ENCODE measurements at regions of chr10 and their contacts with region 1.

Region 1: GRCh38 chr10:61140765-61141392 is 196.9 kb upstream of the RHOBTB1 start:
- DNase-seq: peak in 3 of 14 experiments; percentile 23 to 33 (median 32)
- ATAC-seq: no peak
- H3K4me3 ChIP-seq: no peak overlapping the region
- H3K4me3 Mint-ChIP-seq: no peak overlapping the region
- H3K27ac ChIP-seq: no peak overlapping the region
- H3K27ac Mint-ChIP-seq: no peak overlapping the region
- H3K4me1 ChIP-seq: no peaks in the 10 kb centered on the region
- H3K4me1 Mint-ChIP-seq: no peaks in the 10 kb centered on the region
- H3K27me3 ChIP-seq: no peaks in the 10 kb centered on the region
- H3K27me3 Mint-ChIP-seq: no peaks in the 10 kb centered on the region
- CTCF ChIP-seq: peak; percentile 60

Region 2: DNA sequence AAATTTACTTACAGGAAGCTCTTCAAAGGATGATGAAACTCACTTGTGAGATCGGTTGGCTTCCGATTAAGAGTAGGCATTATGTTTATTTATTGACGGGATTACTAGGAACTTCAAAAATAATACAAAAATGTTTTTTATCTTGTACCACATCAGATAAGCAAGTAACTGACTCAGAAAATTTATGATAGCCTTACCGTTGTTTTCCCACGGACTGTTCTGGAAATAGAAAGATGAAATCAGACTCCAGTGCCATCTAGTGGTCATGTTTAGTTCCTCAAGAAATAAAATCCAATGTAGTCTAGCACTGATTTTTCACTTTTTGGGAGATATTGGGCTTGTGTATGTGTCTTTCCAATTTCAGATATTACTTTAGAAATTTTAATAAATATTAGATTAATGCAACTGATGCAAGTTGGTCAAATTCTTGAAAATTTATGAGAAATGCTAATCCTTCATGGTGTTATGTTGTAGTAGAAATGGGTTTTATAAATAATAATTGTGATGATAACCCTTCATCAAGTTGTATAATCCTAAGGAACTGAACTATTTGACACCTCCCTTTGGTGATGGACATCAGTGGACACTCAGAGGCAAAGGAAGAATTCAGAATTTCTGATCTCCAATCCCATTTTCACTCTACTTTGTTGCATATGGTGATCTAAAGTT is 143.5 kb after region 1 on chr10:
- CTCF ChIA-PET with region 1: no interaction called
- POLR2A ChIA-PET with region 1: no interaction called
- intact Hi-C with region 1: loop called in 1 of 2 experiments (anchors 5 kb)
- DNase-seq: peak in 3 of 14 experiments; percentile 53 to 65 (median 59)
- ATAC-seq: peak; percentile 31
- H3K4me3 ChIP-seq: peak overlapping the region; percentile 7
- H3K4me3 Mint-ChIP-seq: peak overlapping the region; percentile 74
- H3K27ac ChIP-seq: no peak overlapping the region
- H3K27ac Mint-ChIP-seq: peak overlapping the region; percentile 16
- H3K4me1 ChIP-seq: no peaks in the 10 kb centered on the region
- H3K4me1 Mint-ChIP-seq: peaks cover 26% of the 10 kb centered on the region
- H3K27me3 ChIP-seq: no peaks in the 10 kb centered on the region
- H3K27me3 Mint-ChIP-seq: no peaks in the 10 kb centered on the region
- CTCF ChIP-seq: peak; percentile 93

Region 3: GRCh38 chr10:61701055-61701705 is 560.3 kb after region 1 on chr10:
- CTCF ChIA-PET with region 1: no interaction called
- POLR2A ChIA-PET with region 1: no interaction called
- intact Hi-C with region 1: no loop called
- DNase-seq: no peak
- ATAC-seq: no peak
- H3K4me3 ChIP-seq: no peak overlapping the region
- H3K4me3 Mint-ChIP-seq: no peak overlapping the region
- H3K27ac ChIP-seq: no peak overlapping the region
- H3K27ac Mint-ChIP-seq: no peak overlapping the region
- H3K4me1 ChIP-seq: no peaks in the 10 kb centered on the region
- H3K4me1 Mint-ChIP-seq: no peaks in the 10 kb centered on the region
- H3K27me3 ChIP-seq: no peaks in the 10 kb centered on the region
- H3K27me3 Mint-ChIP-seq: no peaks in the 10 kb centered on the region
- CTCF ChIP-seq: no peak

Region 4: DNA sequence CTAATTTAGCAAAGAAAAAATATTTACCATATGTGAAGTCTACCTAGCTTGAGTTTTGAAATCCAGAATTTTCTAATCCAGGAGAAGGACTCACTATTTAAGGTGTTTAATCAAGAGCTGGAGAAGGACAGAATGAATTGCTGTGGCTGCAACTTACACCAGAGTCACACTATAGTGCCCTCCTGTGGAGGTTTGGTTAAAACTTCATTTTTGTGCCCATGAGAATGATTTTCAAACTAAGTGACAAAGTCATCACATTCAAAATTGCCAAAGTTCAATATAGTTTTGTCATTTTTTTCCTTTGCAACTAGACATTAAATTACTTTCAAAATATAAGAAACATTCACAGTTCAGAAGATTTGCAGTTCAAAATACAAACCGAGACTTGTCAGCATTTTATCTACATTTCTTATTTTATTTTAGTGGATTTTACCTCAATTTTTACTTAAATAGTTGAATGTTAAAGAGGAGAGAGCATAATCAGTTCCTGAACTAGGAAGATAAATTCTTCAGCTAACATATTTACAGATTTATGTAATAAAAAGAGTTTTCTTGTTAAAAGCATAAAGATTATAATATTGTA is 592.6 kb after region 1 on chr10:
- CTCF ChIA-PET with region 1: no interaction called
- POLR2A ChIA-PET with region 1: no interaction called
- intact Hi-C with region 1: loop called (anchors 5 kb)
- DNase-seq: peak in 3 of 14 experiments; percentile 22 to 30 (median 27)
- ATAC-seq: no peak
- H3K4me3 ChIP-seq: no peak overlapping the region
- H3K4me3 Mint-ChIP-seq: no peak overlapping the region
- H3K27ac ChIP-seq: no peak overlapping the region
- H3K27ac Mint-ChIP-seq: no peak overlapping the region
- H3K4me1 ChIP-seq: no peaks in the 10 kb centered on the region
- H3K4me1 Mint-ChIP-seq: no peaks in the 10 kb centered on the region
- H3K27me3 ChIP-seq: peaks cover 0 to 14% of the 10 kb centered on the region in 2 experiments
- H3K27me3 Mint-ChIP-seq: peaks cover 47% of the 10 kb centered on the region
- CTCF ChIP-seq: peak; percentile 65

Region 5: GRCh38 chr10:61835069-61835945 is 694.4 kb after region 1 on chr10:
- CTCF ChIA-PET with region 1: no interaction called
- POLR2A ChIA-PET with region 1: no interaction called
- intact Hi-C with region 1: loop called in 1 of 2 experiments (anchors 10 kb)
- DNase-seq: peak in 3 of 14 experiments; percentile 41 to 47 (median 41)
- ATAC-seq: no peak
- H3K4me3 ChIP-seq: no peak overlapping the region
- H3K4me3 Mint-ChIP-seq: no peak overlapping the region
- H3K27ac ChIP-seq: no peak overlapping the region
- H3K27ac Mint-ChIP-seq: no peak overlapping the region
- H3K4me1 ChIP-seq: no peaks in the 10 kb centered on the region
- H3K4me1 Mint-ChIP-seq: peaks cover 14% of the 10 kb centered on the region
- H3K27me3 ChIP-seq: no peaks in the 10 kb centered on the region
- H3K27me3 Mint-ChIP-seq: no peaks in the 10 kb centered on the region
- CTCF ChIP-seq: peak; percentile 48